HAP-1 (cell line): ENCODE measurements at regions of chr1 and their contacts with region 1.

Region 1: DNA sequence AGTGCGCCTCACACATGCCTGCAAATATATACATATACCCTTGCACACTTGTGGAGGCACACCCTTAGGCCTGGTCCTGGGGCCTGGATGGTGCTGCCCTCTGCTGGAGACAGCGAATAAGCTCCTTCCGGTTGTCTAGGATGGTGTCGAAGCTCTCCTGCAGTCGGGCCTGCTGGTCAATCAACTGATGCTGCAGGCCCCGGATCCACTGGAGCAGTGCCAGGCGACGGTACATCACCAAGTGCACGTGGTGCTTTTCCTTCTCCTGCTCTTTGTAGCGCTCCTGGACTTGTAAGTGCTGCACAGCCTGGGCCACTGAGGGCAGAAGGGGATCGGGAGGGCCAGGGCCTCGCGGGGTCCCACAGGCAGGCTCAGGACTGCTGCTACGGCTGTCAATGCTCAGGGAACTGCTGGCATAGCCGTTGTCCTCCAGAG is 3.1 kb downstream of the C1orf216 start:
- DNase-seq: peak; percentile 75 to 91
- H3K4me3 ChIP-seq: no peak overlapping the region
- H3K4me1 ChIP-seq: peaks cover 22% of the 10 kb centered on the region
- H3K27me3 ChIP-seq: no peaks in the 10 kb centered on the region

Region 2: GRCh38 chr1:35564037-35564883 is 151.3 kb before region 1 on chr1:
- in situ Hi-C with region 1: loop called (anchors 5 kb)
- DNase-seq: peak; percentile 40 to 91
- H3K4me3 ChIP-seq: no peak overlapping the region
- H3K4me1 ChIP-seq: no peaks in the 10 kb centered on the region
- H3K27me3 ChIP-seq: no peaks in the 10 kb centered on the region

Region 3: DNA sequence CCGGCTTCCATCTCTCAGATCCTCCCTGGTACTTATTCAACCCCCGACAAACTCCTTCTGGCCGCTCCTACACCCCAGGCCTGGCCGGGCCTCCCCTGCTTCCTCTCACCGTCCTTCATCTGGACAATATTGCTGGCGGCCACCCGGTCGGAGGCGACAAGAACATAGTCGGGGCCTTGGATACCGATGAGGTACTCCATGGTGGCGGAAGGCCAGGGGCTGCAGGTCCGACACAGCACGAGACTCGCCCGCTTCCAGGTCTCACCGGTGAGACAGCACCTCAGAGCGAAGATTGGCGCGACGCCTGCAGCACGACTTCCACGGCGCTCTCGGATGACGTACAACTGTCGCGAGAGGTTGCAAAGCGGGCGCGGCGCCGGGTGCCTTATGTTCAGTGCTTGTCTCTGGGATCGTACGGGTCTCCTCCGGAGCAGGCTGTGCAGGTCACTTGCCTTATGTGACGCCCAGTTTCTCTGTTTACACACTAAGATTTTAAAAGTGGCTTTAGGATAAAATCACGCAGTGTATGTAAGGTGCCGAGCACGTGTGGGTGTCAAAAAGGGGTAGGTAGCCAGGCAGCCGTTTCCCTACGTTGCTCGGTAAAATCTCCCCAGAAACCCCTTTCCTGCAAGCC is 74.2 kb before region 1 on chr1 and contains the start of gene PSMB2:
- in situ Hi-C with region 1: loop called (anchors 5 kb)
- DNase-seq: peak; percentile 92 to 97
- H3K4me3 ChIP-seq: peak within 1 kb of the TSS; percentile 90
- H3K4me1 ChIP-seq: peaks cover 26% of the 10 kb centered on the region
- H3K27me3 ChIP-seq: peaks cover 7% of the 10 kb centered on the region; the same call in 1 of the 2 replicates